Gastrocnemius medialis (tissue), 4 donors: ENCODE measurements at regions of chr16 and their contacts with region 1.

Region 1: DNA sequence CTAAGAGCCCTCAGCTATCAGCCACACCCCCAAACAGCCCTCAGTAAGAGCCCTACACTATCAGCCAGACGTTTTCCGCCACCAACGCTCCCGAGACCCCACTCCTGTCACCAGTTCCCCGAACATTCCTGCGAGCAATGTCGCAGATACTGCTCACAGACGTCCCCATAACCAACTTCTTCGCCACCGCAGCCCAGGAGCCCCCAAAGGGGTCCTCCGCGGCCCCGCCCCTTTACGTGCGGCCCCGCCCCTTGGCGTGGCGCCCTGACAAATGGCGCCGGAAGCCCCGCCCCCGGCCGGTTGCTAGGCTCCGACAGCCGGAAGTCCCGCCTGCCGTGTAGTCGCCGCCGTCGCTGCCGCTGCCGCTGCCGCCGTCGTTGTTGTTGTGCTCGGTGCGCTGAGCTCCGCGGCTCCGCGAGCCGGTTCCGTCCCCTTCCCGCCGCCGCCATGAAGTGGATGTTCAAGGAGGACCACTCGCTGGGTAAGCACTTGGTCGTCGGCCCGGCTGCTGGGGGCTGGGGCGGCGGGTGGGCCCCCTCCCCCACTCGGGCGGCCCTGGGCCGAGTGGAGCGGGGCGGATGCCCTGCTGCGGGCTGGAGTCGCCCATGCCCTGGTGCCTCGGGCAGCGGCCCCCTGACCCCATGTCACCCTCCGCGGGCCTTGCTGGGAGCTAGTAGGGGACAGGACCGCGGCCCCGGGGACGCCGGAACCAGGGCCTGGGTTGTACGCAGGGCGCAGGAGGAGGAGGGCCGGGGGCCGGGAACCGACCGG is at the start of gene GABARAPL2:
- DNase-seq: peak; percentile 51 to 65
- ATAC-seq: peak; percentile 91 to 95
- H3K4me3 ChIP-seq: peak within 1 kb of the TSS; percentile 89 to 98 (median 96)
- H3K27ac ChIP-seq: peak within 1 kb of the TSS; percentile 81 to 92 (median 86)
- H3K4me1 ChIP-seq: peaks cover 34 to 54% of the 10 kb centered on the region in 2 donors
- H3K27me3 ChIP-seq: no peaks in the 10 kb centered on the region
- CTCF ChIP-seq: no peak
- POLR2A ChIP-seq: peak; percentile 90 to 91
- total RNA-seq, gene GABARAPL2: 92.2 to 137 (median 117) TPM

Region 2: DNA sequence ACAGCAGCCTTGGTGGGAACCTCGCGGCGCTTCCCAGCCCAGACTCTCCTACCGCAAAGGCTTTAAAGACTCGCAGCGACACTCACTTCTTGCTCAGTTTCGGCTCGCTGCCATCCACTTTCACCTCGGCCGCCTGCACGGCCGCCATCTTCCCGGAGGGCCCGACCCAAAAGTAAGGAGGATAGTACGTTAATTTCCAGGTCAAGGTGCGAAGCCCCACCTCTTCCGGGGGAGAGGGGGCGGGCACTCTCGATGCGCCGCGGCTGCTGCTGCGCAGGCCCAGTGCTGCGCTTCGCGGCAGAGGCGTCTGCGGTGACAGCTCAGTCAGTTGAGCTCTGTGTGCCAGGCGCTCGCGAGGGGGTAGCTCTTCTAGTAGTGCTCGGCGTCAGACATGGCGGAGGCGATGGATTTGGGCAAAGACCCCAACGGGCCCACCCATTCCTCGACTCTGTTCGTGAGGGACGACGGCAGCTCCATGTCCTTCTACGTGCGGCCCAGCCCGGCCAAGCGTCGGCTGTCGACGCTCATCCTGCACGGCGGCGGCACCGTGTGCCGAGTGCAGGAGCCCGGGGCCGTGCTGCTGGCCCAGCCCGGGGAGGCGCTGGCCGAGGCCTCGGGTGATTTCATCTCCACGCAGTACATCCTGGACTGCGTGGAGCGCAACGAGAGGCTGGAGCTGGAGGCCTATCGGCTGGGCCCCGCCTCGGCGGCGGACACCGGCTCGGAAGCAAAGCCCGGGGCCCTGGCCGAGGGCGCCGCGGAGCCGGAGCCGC is 81.5 kb after region 1 on chr16 and contains the starts of genes KARS1 and TERF2IP:
- in situ Hi-C with region 1: no loop called
- intact Hi-C with region 1: loop called (anchors 1 kb)
- DNase-seq: peak; percentile 93 to 94
- ATAC-seq: peak; percentile 92
- H3K4me3 ChIP-seq: peak within 1 kb of the TSS; percentile 85 to 99 (median 92)
- H3K27ac ChIP-seq: peak within 1 kb of the TSS; percentile 95 to 98 (median 97)
- H3K4me1 ChIP-seq: peaks cover 58 to 59% of the 10 kb centered on the region in 2 donors
- H3K27me3 ChIP-seq: no peaks in the 10 kb centered on the region
- CTCF ChIP-seq: no peak
- POLR2A ChIP-seq: peak; percentile 97
- total RNA-seq, gene KARS1: 183 to 251 (median 206) TPM
- total RNA-seq, gene TERF2IP: 44.5 to 73.6 (median 69.7) TPM